ENCODE measurements at regions of chr3 and their contacts with region 1.

Region 1: GRCh38 chr3:170869645-170870593 is at the start of gene RPL22L1:
- DNase-seq: peak; percentile 77 to 90
- H3K4me3 ChIP-seq: peak within 1 kb of the TSS; percentile 80 to 93 (median 86)
- H3K27ac ChIP-seq: peak within 1 kb of the TSS; percentile 97
- H3K4me1 ChIP-seq: peaks cover 0 to 6% (median 2%) of the 10 kb centered on the region in 4 experiments; a peak in 5 of 7 replicates
- H3K27me3 ChIP-seq: no peaks in the 10 kb centered on the region
- CTCF ChIP-seq: peak in 2 of 3 experiments; percentile 2 to 8; a peak in 2 of 4 replicates
- EP300 ChIP-seq: peak in 1 of 2 experiments; percentile 4; a peak in 1 of 3 replicates
- POLR2A ChIP-seq: peak; percentile 98 to 99
- RAD21 ChIP-seq: no peak; a peak in 1 of 4 replicates
- total RNA-seq, gene RPL22L1: 271 and 280 TPM in 2 replicates

Region 2: DNA sequence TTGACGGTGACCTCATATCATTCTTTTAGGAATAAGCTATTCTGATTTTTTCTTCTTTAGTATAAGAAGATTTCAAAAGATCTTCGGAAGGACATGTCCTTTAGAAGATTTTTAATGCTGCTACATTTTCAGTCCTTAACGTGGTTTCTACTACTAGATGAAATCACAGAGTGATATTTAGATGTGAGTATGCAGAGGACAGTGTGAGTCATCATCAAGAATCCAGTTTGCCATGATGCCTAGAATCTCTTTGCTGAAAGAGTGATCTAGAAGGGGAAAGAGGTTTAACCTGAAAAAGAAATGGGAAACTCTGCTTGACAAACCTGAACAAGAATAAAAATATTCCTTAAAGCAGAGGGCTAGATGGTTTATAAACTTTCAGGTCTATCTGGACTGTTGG is 327.2 kb before region 1 on chr3:
- CTCF ChIA-PET with region 1: no interaction called
- POLR2A ChIA-PET with region 1: no interaction called
- DNase-seq: no peak
- H3K4me3 ChIP-seq: no peak overlapping the region
- H3K27ac ChIP-seq: no peak overlapping the region
- H3K4me1 ChIP-seq: no peaks in the 10 kb centered on the region
- H3K27me3 ChIP-seq: no peaks in the 10 kb centered on the region
- CTCF ChIP-seq: no peak
- EP300 ChIP-seq: no peak
- POLR2A ChIP-seq: no peak
- RAD21 ChIP-seq: no peak

Region 3: DNA sequence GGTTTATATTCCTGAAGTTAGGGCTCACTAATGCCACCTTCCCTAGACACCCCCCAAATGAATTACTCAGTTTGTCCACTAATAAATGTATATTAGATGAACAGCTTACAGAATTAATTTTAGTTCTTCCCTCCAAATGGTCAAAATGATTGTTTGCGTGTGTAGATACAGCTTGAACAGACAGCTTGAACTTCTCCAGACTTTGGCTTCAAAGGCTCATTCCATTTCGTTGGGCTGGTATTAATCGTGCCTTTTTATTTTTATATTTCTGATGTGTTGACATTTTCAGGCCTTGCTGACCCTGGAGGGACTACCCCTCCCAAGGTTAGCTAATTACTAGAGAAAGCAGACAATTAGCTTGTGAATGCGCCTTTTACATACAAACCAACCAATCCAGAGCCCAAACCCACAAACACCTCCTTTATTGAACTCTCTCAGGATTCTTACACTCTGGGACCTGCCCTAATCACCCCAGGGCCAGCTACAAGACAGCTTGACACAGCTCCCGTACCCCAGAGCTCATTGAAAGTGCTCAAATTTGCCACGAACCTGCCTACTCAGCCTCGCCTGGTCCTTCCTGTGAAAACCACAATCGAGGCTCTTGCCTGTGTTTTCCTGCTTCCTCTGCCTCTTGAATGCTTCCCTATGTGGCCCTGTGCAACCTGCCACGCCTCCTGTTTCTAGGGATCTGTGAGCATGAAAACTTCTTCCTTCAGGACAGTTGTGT is 40.2 kb before region 1 on chr3:
- CTCF ChIA-PET with region 1: no interaction called
- POLR2A ChIA-PET with region 1: interaction called, 14 read pairs
- DNase-seq: no peak
- H3K4me3 ChIP-seq: no peak overlapping the region
- H3K27ac ChIP-seq: no peak overlapping the region
- H3K4me1 ChIP-seq: peaks cover 2 to 20% (median 13%) of the 10 kb centered on the region in 4 experiments; a peak in 5 of 7 replicates
- H3K27me3 ChIP-seq: no peaks in the 10 kb centered on the region
- CTCF ChIP-seq: no peak
- EP300 ChIP-seq: no peak
- POLR2A ChIP-seq: no peak
- RAD21 ChIP-seq: no peak

Region 4: GRCh38 chr3:170835336-170835735 is 34.6 kb before region 1 on chr3:
- CTCF ChIA-PET with region 1: no interaction called
- POLR2A ChIA-PET with region 1: interaction called, 10 read pairs
- DNase-seq: no peak
- H3K4me3 ChIP-seq: no peak overlapping the region
- H3K27ac ChIP-seq: no peak overlapping the region
- H3K4me1 ChIP-seq: peaks cover 2 to 12% (median 5%) of the 10 kb centered on the region in 4 experiments; a peak in 3 of 7 replicates
- H3K27me3 ChIP-seq: no peaks in the 10 kb centered on the region
- CTCF ChIP-seq: no peak
- EP300 ChIP-seq: no peak
- POLR2A ChIP-seq: no peak
- RAD21 ChIP-seq: no peak

Region 5: GRCh38 chr3:170848292-170848917 is 21.5 kb before region 1 on chr3:
- CTCF ChIA-PET with region 1: interaction called, 9 read pairs
- POLR2A ChIA-PET with region 1: interaction called, 31 read pairs
- DNase-seq: no peak
- H3K4me3 ChIP-seq: no peak overlapping the region
- H3K27ac ChIP-seq: no peak overlapping the region
- H3K4me1 ChIP-seq: no peaks in the 10 kb centered on the region
- H3K27me3 ChIP-seq: no peaks in the 10 kb centered on the region
- CTCF ChIP-seq: no peak
- EP300 ChIP-seq: no peak
- POLR2A ChIP-seq: no peak
- RAD21 ChIP-seq: peak in 1 of 2 experiments; percentile 24; a peak in 2 of 4 replicates

Region 6: GRCh38 chr3:170889132-170889531 is 19.2 kb after region 1 on chr3:
- CTCF ChIA-PET with region 1: interaction called, 3 read pairs
- POLR2A ChIA-PET with region 1: interaction called, 29 read pairs
- DNase-seq: no peak
- H3K4me3 ChIP-seq: no peak overlapping the region
- H3K27ac ChIP-seq: no peak overlapping the region
- H3K4me1 ChIP-seq: no peaks in the 10 kb centered on the region
- H3K27me3 ChIP-seq: no peaks in the 10 kb centered on the region
- CTCF ChIP-seq: no peak
- EP300 ChIP-seq: no peak
- POLR2A ChIP-seq: no peak
- RAD21 ChIP-seq: no peak

Region 7: DNA sequence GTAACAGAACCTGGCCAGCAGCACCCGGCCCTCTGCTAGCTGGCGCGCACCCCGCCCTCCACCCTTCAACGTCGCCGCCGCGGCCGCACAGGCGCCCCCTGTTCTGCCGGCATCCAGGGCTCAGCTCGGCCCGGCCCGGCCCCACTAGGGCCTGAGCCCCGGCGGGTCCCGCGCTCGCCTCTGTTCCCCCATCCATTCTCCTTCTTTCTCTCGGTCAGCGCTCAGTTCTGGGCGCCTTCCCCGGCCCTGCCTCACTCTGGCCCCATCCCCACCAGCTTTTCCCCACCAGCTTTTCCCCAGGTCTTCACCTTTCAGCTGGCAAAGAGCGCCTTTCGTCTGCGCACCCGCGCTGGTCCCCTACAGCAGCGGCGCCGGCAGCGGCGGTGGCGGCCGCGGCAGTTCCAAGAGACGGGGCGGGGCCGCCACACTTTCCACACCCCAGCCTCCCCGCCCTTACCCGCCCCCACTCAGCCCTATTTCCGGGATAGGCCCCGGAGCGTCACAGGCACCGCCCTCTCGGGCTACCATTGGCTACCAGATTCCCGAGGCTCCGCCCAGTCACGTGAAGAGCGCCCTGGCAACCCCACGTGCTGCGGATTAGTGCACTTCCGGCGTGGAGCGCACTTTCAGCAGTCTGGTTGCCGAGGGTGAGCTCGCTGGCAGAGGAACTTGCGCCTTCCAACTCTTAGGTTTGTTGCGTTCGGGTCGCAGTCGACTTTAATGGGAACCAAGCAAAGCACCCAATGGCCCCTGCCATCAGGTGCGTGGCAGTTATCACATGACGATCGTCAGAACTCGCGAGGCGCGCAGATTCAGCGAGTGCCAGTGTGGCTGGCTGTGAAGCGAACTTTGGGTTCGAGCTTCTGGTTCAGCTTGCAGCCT is 38.6 kb after region 1 on chr3 and contains the start of gene EIF5A2:
- CTCF ChIA-PET with region 1: interaction called, 3 read pairs
- POLR2A ChIA-PET with region 1: interaction called, 15 read pairs
- DNase-seq: peak; percentile 83 to 94
- H3K4me3 ChIP-seq: peak within 1 kb of the TSS; percentile 63 to 80 (median 70)
- H3K27ac ChIP-seq: no peak within 1 kb of the TSS
- H3K4me1 ChIP-seq: peaks cover 0 to 5% (median 2%) of the 10 kb centered on the region in 4 experiments; a peak in 3 of 7 replicates
- H3K27me3 ChIP-seq: peaks cover 0 to 17% (median 12%) of the 10 kb centered on the region in 4 experiments; a peak in 6 of 7 replicates
- CTCF ChIP-seq: no peak
- EP300 ChIP-seq: peak in 1 of 2 experiments; percentile 7; a peak in 1 of 3 replicates
- POLR2A ChIP-seq: peak in 1 of 2 experiments; percentile 51; a peak in 1 of 3 replicates
- RAD21 ChIP-seq: no peak
- total RNA-seq, gene EIF5A2: 13.8 and 15.0 TPM in 2 replicates

Region 8: DNA sequence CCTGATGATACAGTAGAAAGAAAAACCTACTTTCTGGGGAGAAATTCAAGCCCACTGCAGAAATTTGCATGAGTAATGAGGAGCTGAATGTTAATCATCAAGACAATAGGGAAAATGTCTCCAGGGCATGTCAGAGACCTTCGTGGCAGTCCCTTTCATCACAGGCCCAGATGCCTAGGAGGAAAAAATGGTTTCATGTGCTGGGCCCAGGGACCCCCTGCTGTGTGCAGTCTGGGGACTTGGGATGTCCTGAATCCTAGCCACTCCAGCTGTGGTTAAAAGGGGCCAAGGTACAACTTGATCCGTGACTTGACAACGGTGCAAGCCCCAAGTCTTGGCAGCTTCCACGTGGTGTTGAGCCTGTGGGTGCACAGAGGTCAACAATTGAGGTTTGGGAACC is 48.8 kb after region 1 on chr3:
- CTCF ChIA-PET with region 1: no interaction called
- POLR2A ChIA-PET with region 1: no interaction called
- DNase-seq: no peak
- H3K4me3 ChIP-seq: no peak overlapping the region
- H3K27ac ChIP-seq: no peak overlapping the region
- H3K4me1 ChIP-seq: no peaks in the 10 kb centered on the region
- H3K27me3 ChIP-seq: no peaks in the 10 kb centered on the region
- CTCF ChIP-seq: no peak
- EP300 ChIP-seq: no peak
- POLR2A ChIP-seq: no peak
- RAD21 ChIP-seq: no peak

Measured in H1 (cell line).